ENCODE measurements at regions of chr14 and their contacts with region 1.

Region 1: GRCh38 chr14:55749201-55749812 is 169.3 kb downstream of the KTN1 start:
- DNase-seq: no peak
- ATAC-seq: no peak
- H3K4me3 ChIP-seq: no peak overlapping the region
- H3K4me1 ChIP-seq: peaks cover 3% of the 10 kb centered on the region
- CTCF ChIP-seq: no peak

Region 2: DNA sequence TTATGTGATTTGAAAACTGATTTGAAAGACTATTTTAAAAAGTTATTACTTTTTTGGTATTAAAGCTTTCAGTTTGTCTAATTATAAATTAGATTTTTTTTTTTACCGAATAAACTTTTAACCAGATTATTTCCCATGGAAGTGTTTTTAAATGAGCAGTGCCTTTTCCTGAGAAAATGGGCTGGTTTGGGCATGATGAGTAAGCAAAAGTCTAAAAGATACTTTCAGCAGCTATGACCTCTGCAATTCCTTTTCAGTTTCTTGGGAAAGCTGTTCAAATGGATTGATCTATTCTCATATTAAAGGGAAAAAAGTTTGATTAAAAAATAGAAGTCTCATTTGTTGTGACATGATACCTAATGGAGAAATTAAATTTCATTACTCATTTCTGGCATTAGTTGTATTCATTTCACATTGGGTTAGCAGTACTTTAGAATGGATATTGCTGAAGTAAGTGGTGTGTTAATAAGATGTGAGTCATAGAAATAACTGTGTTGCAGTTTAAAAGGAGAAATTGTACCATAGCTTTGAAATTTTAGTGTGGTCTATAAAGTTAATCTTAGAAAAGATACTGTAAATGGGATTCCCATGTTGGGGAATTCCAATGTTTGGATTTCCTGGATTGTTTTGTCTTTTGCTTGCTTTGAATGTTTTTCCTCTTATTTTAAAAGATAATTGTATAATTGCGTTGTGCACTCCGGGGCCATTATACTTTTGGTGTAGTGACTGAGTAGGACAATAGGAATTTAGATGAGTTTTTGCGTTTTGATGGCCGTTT is 148.3 kb before region 1 on chr14:
- intact Hi-C with region 1: no loop called
- DNase-seq: no peak
- ATAC-seq: peak; percentile 30
- H3K4me3 ChIP-seq: no peak overlapping the region
- H3K4me1 ChIP-seq: peaks cover 17% of the 10 kb centered on the region
- CTCF ChIP-seq: no peak

Region 3: GRCh38 chr14:55699131-55700057 is 49.9 kb before region 1 on chr14:
- intact Hi-C with region 1: no loop called
- DNase-seq: peak in 1 of 3 donors; percentile 30
- ATAC-seq: peak; percentile 22
- H3K4me3 ChIP-seq: no peak overlapping the region
- H3K4me1 ChIP-seq: peaks cover 8% of the 10 kb centered on the region
- CTCF ChIP-seq: no peak

Region 4: GRCh38 chr14:57085808-57086207 is 1336.5 kb after region 1 on chr14:
- intact Hi-C with region 1: loop called in 1 of 2 experiments (anchors 10 kb)
- DNase-seq: no peak
- ATAC-seq: peak; percentile 11
- H3K4me3 ChIP-seq: no peak overlapping the region
- H3K4me1 ChIP-seq: no peaks in the 10 kb centered on the region
- CTCF ChIP-seq: no peak